HepG2 (cell line): ENCODE measurements at regions of chr14 and their contacts with region 1.

Region 1: GRCh38 chr14:103333754-103334643 is at the start of gene EIF5:
- DNase-seq: peak; percentile 94
- ATAC-seq: peak; percentile 92
- H3K4me3 ChIP-seq: peak within 1 kb of the TSS; percentile 90 to 98 (median 97)
- H3K27ac ChIP-seq: peak within 1 kb of the TSS; percentile 97
- H3K4me1 ChIP-seq: peaks cover 60% of the 10 kb centered on the region
- H3K27me3 ChIP-seq: no peaks in the 10 kb centered on the region; a peak in 1 of 5 replicates
- CTCF ChIP-seq: peak; percentile 23; the same call in 1 of the 2 replicates
- EP300 ChIP-seq: peak in 1 of 2 experiments; percentile 47; a peak in 1 of 4 replicates
- POLR2A ChIP-seq: peak; percentile 97 to 99
- RAD21 ChIP-seq: peak; percentile 66
- total RNA-seq, gene EIF5: 281 and 333 TPM in 2 replicates

Region 2: DNA sequence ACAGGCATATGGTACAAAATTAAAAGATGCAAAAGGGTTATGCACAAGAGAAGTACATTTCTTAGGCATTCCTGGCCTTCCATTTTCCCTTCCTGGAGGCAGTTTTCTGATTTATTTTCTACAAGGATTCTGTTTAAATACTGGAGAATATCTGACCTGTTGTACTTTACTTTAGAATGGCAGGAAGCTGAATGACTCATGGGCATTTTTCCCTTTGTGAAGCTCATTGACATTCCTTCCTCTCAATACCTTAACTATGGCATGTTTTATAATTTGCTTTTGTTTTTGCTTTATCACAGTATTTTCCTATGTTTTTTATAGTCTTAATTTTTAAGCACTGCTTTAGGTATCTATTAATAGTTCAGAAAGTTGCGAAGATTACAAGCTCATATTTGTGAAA is 678.8 kb before region 1 on chr14:
- CTCF ChIA-PET with region 1: no interaction called
- POLR2A ChIA-PET with region 1: no interaction called
- in situ Hi-C with region 1: no loop called
- intact Hi-C with region 1: no loop called
- DNase-seq: peak; percentile 74
- ATAC-seq: peak; percentile 83
- H3K4me3 ChIP-seq: no peak overlapping the region
- H3K27ac ChIP-seq: peak overlapping the region; percentile 60
- H3K4me1 ChIP-seq: peaks cover 43% of the 10 kb centered on the region
- H3K27me3 ChIP-seq: no peaks in the 10 kb centered on the region
- CTCF ChIP-seq: no peak
- EP300 ChIP-seq: no peak
- POLR2A ChIP-seq: no peak
- RAD21 ChIP-seq: no peak

Region 3: DNA sequence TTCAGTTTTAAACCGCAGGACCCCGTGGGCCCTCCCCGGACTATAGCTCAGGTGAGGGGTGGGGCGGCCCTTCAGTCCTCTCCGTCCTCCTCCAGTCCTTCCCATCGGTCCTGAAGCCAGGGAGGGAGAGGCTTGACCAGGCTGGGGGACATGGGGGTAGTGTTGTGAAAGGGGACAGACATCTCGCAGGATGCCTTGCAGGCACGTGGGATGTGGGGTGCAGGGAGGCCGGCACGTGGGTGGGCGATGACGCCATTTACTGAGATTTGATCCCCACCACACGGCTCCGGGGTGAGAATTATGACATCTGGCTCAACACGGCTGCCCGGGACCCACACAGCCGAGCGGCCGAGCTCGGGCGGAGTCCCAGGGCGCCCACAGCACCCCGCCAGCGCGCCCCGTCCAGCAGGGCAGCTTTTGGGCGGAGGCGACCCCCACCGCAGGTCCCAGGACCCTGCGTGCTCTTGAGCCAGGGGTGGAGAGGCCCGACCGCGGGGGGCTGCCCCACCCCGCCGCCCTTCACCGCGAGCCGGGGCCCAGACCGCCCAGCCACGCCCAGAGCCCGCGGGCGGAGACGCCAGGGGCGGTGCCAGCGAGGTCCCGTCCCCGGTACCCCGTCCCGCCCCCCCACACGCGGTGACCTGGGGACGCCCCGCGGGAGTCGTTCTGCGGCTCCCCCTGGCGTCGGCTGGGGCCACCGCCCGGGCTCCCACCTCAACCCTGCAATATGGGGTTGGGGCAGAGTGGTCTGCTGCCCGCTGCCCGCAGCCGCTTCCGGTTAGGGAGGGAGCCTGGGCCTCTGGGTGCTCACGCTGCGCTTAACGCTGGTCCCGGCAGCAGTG is 242.7 kb before region 1 on chr14:
- CTCF ChIA-PET with region 1: no interaction called
- POLR2A ChIA-PET with region 1: interaction called, 13 read pairs
- in situ Hi-C with region 1: no loop called
- intact Hi-C with region 1: no loop called
- DNase-seq: no peak
- ATAC-seq: peak; percentile 12
- H3K4me3 ChIP-seq: peak overlapping the region in 2 of 3 experiments; percentile 3 to 40; a peak in 1 of 6 replicates
- H3K27ac ChIP-seq: no peak overlapping the region
- H3K4me1 ChIP-seq: peaks cover 89% of the 10 kb centered on the region
- H3K27me3 ChIP-seq: peaks cover 0 to 8% of the 10 kb centered on the region in 2 experiments; a peak in 3 of 5 replicates
- CTCF ChIP-seq: peak; percentile 66
- EP300 ChIP-seq: no peak
- POLR2A ChIP-seq: no peak
- RAD21 ChIP-seq: peak; percentile 41; the same call in 1 of the 2 replicates

Region 4: GRCh38 chr14:103315351-103315911 is 18.6 kb before region 1 on chr14:
- CTCF ChIA-PET with region 1: no interaction called
- POLR2A ChIA-PET with region 1: interaction called, 14 read pairs
- in situ Hi-C with region 1: no loop called
- intact Hi-C with region 1: no loop called
- DNase-seq: peak; percentile 74
- ATAC-seq: peak; percentile 77
- H3K4me3 ChIP-seq: peak overlapping the region; percentile 29 to 66 (median 31); a peak in 5 of 6 replicates
- H3K27ac ChIP-seq: peak overlapping the region; percentile 11
- H3K4me1 ChIP-seq: peaks cover 41% of the 10 kb centered on the region
- H3K27me3 ChIP-seq: peaks cover 4 to 18% of the 10 kb centered on the region in 2 experiments; a peak in 4 of 5 replicates
- CTCF ChIP-seq: peak; percentile 32
- EP300 ChIP-seq: 0 out of 4 replicates have a peak, but pooled peaks of 1 of the 2 experiments have one; percentile 34
- POLR2A ChIP-seq: no peak
- RAD21 ChIP-seq: no peak

Region 5: GRCh38 chr14:103356024-103356682 is 22.2 kb after region 1 on chr14:
- CTCF ChIA-PET with region 1: no interaction called
- POLR2A ChIA-PET with region 1: interaction called, 12 read pairs
- in situ Hi-C with region 1: no loop called
- intact Hi-C with region 1: no loop called
- DNase-seq: no peak
- ATAC-seq: peak; percentile 73
- H3K4me3 ChIP-seq: peak overlapping the region; percentile 8 to 54 (median 46); a peak in 5 of 6 replicates
- H3K27ac ChIP-seq: no peak overlapping the region
- H3K4me1 ChIP-seq: peaks cover 44% of the 10 kb centered on the region
- H3K27me3 ChIP-seq: no peaks in the 10 kb centered on the region; a peak in 1 of 5 replicates
- CTCF ChIP-seq: no peak
- EP300 ChIP-seq: no peak
- POLR2A ChIP-seq: no peak
- RAD21 ChIP-seq: no peak

Region 6: GRCh38 chr14:103391048-103391447 is 57.0 kb after region 1 on chr14:
- CTCF ChIA-PET with region 1: no interaction called
- POLR2A ChIA-PET with region 1: interaction called, 13 read pairs
- in situ Hi-C with region 1: no loop called
- intact Hi-C with region 1: no loop called
- DNase-seq: peak; percentile 44
- ATAC-seq: peak; percentile 56
- H3K4me3 ChIP-seq: no peak overlapping the region
- H3K27ac ChIP-seq: no peak overlapping the region
- H3K4me1 ChIP-seq: peaks cover 63% of the 10 kb centered on the region
- H3K27me3 ChIP-seq: no peaks in the 10 kb centered on the region; a peak in 1 of 5 replicates
- CTCF ChIP-seq: peak; percentile 58
- EP300 ChIP-seq: no peak
- POLR2A ChIP-seq: no peak
- RAD21 ChIP-seq: no peak